Sciatic nerve (tissue), 2 donors: ENCODE measurements at regions of chr6 and their contacts with region 1.

Region 1: DNA sequence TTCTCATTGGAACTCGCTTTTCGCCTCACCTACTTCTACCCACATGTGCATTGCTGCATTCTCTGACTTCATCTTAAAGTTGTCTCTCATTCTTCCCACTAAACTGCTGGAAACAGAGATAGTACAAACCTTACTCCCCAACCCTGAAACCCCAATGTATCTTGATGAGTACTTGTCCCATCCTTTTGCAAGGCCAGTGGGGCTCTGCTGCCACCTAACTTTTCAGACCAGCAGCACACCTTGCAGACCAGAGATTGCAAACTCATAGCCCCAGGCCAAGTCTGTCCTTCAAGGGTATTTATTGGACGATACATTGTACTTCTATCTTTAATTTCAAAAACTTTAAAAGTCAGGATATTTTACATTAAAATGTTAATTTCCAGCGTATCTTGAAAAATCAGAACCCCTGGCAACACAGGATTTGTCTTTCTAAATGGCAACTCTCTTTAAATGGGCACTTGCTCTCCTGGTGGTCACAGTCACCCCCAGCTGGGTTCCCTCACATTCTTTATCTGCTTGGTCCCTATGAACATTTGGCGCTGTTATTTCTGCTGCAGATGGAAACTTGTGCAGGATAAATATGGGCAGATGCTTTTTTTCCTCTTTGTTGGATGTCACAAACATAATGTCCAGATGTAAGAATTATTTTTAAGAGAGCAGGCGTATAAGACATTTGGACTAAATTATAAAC is 83.9 kb downstream of the SOD2 start:
- DNase-seq: no peak
- ATAC-seq: peak; percentile 26

Region 2: GRCh38 chr6:159540152-159540551 is 69.0 kb before region 1 on chr6:
- intact Hi-C with region 1: no loop called
- DNase-seq: no peak
- ATAC-seq: no peak

Region 3: GRCh38 chr6:160462551-160463109 is 853.5 kb after region 1 on chr6:
- intact Hi-C with region 1: loop called (anchors 5 kb)
- DNase-seq: no peak
- ATAC-seq: no peak